Posterior vena cava (tissue), 2 donors: ENCODE measurements at regions of chrX and their contacts with region 1.

Region 1: GRCh38 chrX:153794018-153794896 is at the starts of genes IDH3G and SSR4:
- DNase-seq: peak; percentile 98
- total RNA-seq, gene IDH3G: 43.9 to 44.1 TPM
- total RNA-seq, gene SSR4: 164 to 225 TPM

Region 2: DNA sequence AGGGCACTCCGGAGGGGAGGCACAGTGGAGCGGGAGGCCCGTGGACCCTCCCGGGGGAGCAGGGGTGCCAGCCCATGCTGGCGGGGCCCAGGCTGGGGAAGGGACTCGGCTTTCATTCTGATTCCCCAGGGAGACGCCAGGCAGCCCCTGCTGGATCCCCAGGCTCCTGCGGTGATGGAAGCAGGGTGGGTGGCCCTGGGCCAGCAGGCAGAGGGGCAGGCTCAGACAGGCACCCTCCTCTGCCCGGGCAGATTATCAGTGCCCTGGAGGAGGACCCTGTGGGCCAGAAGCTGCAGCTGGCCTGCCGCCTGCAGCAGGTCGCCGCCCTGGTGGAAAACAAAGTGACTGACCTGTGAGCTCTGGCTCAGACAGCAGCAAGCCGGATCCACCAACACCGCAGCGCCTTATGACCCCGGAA is 15.6 kb before region 1 on chrX:
- intact Hi-C with region 1: no loop called
- DNase-seq: no peak

Region 3: DNA sequence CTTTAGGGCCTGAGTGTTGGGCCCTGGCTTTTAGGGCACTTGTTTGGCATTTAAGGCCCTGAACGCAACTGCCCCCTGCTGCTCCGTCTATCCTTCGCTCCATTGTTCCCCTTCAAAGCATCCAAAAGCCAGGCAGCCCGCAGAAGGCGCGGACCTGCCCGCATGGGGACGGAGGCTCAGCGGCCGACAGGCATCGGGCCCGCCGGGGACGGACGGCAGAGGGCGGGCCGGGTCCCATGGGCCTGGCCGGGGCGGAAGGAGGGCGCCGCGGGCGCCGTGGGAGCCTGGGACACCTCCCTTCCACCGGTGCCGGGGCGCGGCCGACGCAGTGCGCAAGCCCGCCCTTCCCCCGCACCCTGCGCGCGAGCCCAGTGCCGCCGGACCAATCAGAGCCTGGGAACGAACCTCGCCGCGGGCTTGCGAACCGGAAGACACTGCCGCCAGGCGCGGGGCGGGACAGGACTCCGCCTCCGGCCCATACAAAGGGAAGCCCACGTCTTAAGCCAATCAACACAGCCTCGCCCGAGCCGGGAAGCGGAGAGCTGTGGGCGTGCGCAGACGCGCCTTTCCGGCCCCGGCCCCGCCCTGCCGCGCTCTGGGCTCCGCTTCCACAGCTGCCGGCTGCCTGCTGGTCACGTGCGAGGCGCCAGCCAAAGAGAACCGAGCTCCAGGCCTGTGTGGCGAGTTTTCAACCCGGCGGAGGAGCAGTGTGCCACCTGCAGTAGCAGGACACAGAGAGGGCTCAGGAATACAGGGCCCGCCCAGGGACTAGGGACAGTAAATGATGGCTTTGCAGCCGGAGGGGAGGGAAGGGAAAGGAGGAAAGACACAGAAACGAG is 133.9 kb after region 1 on chrX:
- intact Hi-C with region 1: loop called in 1 of 2 experiments (anchors 10 kb)
- DNase-seq: peak; percentile 99